Pancreas (tissue), 10 donors: ENCODE measurements at regions of chr1 and their contacts with region 1.

Region 1: GRCh38 chr1:92968138-92969032 is 7.1 kb upstream of the DIPK1A start:
- DNase-seq: no peak
- ATAC-seq: peak; percentile 68 to 87 (median 82)
- H3K4me3 ChIP-seq: no peak overlapping the region
- H3K27ac ChIP-seq: no peak overlapping the region
- H3K4me1 ChIP-seq: no peaks in the 10 kb centered on the region
- H3K27me3 ChIP-seq: no peaks in the 10 kb centered on the region
- CTCF ChIP-seq: peak in 3 of 4 donors; percentile 31 to 43 (median 40)

Region 2: DNA sequence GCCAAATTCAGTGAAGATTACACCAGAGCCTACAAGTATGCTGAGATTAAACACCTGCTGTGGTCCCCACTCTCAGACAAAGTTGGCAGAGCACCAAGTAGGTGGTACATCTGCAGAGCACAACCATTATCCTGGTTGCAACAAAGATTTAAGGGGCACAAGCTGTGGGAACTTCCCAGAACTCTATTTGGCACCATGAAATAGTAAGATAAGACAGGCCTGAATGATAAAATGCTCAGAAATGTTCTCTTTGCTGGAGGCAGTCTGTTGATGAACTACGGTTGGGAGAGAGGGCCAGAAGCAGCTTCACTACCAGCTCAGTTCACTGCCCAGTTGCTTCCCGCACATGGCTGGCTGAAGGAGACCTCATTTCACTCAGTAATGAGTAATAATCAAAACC is 116.7 kb before region 1 on chr1:
- intact Hi-C with region 1: loop called in 1 of 3 experiments (anchors 5 kb)
- DNase-seq: no peak
- ATAC-seq: no peak
- H3K4me3 ChIP-seq: no peak overlapping the region
- H3K27ac ChIP-seq: no peak overlapping the region
- H3K4me1 ChIP-seq: no peaks in the 10 kb centered on the region
- H3K27me3 ChIP-seq: no peaks in the 10 kb centered on the region
- CTCF ChIP-seq: no peak

Region 3: DNA sequence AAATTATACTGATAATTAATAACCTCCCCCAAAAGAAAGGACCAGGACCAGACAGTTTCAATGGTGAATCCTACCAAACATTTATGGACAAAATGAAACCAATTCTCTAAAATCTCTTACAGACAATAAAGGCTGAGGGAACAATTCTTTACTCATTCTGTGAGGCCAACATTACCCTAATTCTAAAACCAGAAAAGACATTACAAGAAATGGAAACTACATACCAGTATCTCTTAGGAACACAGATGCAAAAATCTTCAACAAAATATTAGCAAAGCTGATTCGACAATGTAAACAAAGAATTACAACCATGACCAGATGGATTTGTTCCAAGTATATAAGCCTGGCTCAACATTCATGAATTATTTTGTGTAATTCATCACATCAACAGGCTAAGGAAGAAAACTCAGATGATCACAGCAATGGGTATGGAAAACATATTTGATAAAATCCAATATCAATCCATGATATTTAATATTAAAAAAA is 203.2 kb after region 1 on chr1:
- intact Hi-C with region 1: no loop called
- DNase-seq: no peak
- ATAC-seq: no peak
- H3K4me3 ChIP-seq: no peak overlapping the region
- H3K27ac ChIP-seq: no peak overlapping the region
- H3K4me1 ChIP-seq: peaks cover 0 to 8% (median 7%) of the 10 kb centered on the region in 3 donors
- H3K27me3 ChIP-seq: no peaks in the 10 kb centered on the region
- CTCF ChIP-seq: no peak

Region 4: GRCh38 chr1:93904228-93904627 is 935.8 kb after region 1 on chr1:
- intact Hi-C with region 1: no loop called
- DNase-seq: no peak
- ATAC-seq: peak in 1 of 4 donors; percentile 24
- H3K4me3 ChIP-seq: no peak overlapping the region
- H3K27ac ChIP-seq: peak overlapping the region in 1 of 4 donors; percentile 32
- H3K4me1 ChIP-seq: peaks cover 5 to 18% (median 8%) of the 10 kb centered on the region in 3 donors
- H3K27me3 ChIP-seq: no peaks in the 10 kb centered on the region
- CTCF ChIP-seq: no peak